Naive thymus-derived CD4-positive, alpha-beta T cell (primary cell): ENCODE measurements at regions of chr10 and their contacts with region 1.

Region 1: DNA sequence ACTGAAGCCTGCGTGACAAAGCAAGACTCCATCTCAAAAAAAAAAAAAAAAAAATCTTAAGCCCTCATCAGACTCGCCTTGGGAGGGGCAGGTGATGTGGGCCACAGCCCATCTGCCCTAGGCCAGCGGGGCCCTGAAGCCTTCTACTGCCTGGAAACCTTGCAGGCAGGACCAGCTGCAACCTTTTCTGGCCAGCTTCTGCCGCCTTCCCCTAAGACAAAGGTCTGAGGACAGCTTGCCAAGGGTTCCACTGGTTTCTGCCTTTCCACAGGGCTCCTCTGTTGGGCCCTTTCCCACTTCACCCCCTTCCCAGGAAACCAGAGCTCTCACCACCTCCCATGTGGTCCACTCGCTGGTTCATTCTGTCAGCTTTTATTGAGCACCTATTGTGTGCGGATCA is 35.2 kb downstream of the UBTD1 start:
- DNase-seq: no peak
- ATAC-seq: no peak
- H3K4me3 ChIP-seq: no peak overlapping the region
- H3K4me3 Mint-ChIP-seq: no peak overlapping the region
- H3K27ac ChIP-seq: no peak overlapping the region
- H3K27ac Mint-ChIP-seq: no peak overlapping the region
- H3K4me1 ChIP-seq: no peaks in the 10 kb centered on the region
- H3K4me1 Mint-ChIP-seq: peaks cover 0 to 5% (median 0%) of the 10 kb centered on the region in 7 donors
- H3K27me3 ChIP-seq: no peaks in the 10 kb centered on the region
- H3K27me3 Mint-ChIP-seq: no peaks in the 10 kb centered on the region

Region 2: GRCh38 chr10:98433881-98434732 is 900.2 kb after region 1 on chr10:
- CTCF ChIA-PET with region 1: interaction called, 11 read pairs
- POLR2A ChIA-PET with region 1: no interaction called
- intact Hi-C with region 1: no loop called
- DNase-seq: no peak
- ATAC-seq: no peak
- H3K4me3 ChIP-seq: no peak overlapping the region
- H3K4me3 Mint-ChIP-seq: no peak overlapping the region
- H3K27ac ChIP-seq: no peak overlapping the region
- H3K27ac Mint-ChIP-seq: no peak overlapping the region
- H3K4me1 ChIP-seq: no peaks in the 10 kb centered on the region
- H3K4me1 Mint-ChIP-seq: peaks cover 1 to 12% (median 6%) of the 10 kb centered on the region in 7 donors
- H3K27me3 ChIP-seq: no peaks in the 10 kb centered on the region
- H3K27me3 Mint-ChIP-seq: no peaks in the 10 kb centered on the region